Thyroid gland (tissue), 4 donors: ENCODE measurements at regions of chr20 and their contacts with region 1.

Region 1: DNA sequence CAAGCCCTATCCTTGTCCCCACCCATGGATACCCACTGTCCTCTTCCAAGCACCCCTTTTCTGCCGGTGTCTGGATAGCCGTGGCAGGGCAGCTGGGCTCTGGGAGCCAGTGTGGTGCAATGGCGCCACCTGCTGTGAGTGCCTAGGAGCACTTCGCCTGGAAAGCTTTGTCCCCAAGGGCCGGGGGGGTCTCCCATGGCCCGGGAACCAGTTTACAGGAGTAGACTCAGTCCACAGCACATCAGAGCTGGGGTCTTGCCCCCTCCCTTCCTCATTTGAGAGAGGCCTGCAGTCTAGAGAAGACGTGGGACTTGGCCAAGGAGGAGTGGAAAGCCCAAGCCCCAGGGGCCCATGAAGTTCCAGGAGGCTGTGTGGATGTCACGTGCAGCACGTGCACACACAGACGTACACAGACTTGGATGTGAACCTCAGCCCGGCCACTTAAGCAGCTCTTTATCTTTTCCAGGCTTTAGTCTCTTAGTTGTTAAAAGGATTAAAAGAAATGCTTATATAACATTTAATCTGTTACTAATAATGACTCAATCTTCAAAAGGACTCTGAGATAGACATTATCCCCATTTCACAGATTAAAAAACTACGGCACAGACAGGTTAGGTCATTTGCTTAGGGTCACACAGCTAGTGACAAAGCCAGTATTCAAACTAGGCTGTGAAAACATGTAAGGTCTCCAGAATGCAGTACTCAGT is 40.9 kb upstream of the CDH22 start:
- DNase-seq: peak; percentile 64 to 68
- H3K4me3 ChIP-seq: no peak overlapping the region
- H3K27ac ChIP-seq: peak overlapping the region; percentile 39 to 58 (median 41)
- H3K4me1 ChIP-seq: peaks cover 24 to 28% of the 10 kb centered on the region in 2 donors
- H3K27me3 ChIP-seq: no peaks in the 10 kb centered on the region
- CTCF ChIP-seq: peak; percentile 38 to 85 (median 77)
- POLR2A ChIP-seq: no peak

Region 2: DNA sequence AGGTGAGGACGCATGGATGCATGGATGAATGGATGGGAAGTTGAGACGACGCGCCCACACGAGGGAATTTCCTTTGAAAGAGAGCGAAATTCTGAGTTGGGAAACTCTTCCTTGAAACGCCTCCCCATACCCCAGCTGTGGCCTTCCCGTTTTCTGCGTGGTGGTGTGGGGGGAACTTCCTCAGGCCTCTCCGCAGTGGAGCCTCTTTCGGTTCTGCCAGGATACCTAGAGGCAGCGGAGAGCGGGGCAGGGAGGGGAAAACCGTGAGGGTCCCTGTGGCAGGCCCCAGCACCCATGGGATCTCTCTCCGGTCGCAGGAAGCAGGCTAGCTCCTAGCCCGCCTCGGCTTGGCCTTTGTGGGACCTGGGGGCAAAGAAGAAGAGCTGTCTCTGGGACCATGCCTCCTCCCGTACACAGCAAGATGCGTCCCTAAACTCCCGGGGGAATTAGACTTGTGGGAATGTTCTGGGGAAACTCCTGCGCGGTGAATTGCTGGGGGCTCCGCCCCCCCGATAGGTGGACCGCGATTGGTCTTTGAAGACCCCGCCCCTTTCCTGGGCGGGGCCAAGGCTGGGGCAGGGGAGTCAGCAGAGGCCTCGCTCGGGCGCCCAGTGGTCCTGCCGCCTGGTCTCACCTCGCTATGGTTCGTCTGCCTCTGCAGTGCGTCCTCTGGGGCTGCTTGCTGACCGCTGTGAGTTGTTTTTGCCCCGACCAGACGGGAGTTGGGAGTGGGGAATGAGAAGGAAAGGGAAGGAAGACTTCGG is 231.3 kb before region 1 on chr20 and contains the start of gene CD40:
- intact Hi-C with region 1: no loop called
- DNase-seq: peak; percentile 87 to 89
- H3K4me3 ChIP-seq: peak within 1 kb of the TSS in 2 of 3 donors; percentile 16 to 23
- H3K27ac ChIP-seq: peak within 1 kb of the TSS; percentile 59 to 80 (median 75)
- H3K4me1 ChIP-seq: peaks cover 13 to 17% of the 10 kb centered on the region in 2 donors
- H3K27me3 ChIP-seq: no peaks in the 10 kb centered on the region
- CTCF ChIP-seq: no peak
- POLR2A ChIP-seq: peak in 1 of 2 donors; percentile 58
- total RNA-seq, gene CD40: 13.0 to 15.9 (median 15.0) TPM

Region 3: DNA sequence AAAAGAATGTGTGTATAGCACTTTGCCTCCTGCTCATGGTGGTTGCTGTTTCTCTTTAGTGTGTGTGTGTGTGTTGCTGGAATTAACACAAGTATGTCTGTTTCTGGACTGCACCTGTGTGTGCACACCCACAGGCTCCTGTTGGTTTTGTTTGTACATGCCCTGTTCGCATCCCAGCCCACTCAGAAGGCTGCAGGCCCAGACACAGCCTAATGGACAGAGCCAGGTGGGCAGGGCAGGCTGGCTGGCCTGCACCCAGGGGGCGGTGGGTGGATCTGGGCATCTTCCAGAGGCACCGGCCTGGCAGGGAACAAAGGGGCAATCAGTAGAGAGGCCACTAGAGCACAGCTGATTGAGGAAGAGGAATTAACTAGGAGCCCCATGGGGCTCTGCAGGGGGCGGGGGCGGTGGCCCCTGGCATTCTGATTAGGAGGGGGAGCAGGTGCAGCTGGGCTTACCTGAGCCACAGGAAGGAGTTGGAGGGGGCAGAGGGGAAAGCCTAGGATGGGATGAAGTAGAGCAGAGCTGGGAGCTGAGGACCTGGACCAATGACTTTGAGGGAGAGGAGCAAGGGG is 209.2 kb before region 1 on chr20:
- intact Hi-C with region 1: loop called (anchors 5 kb)
- DNase-seq: peak; percentile 87 to 95
- H3K4me3 ChIP-seq: no peak overlapping the region
- H3K27ac ChIP-seq: peak overlapping the region in 1 of 3 donors; percentile 42
- H3K4me1 ChIP-seq: peaks cover 9 to 21% of the 10 kb centered on the region in 2 donors
- H3K27me3 ChIP-seq: no peaks in the 10 kb centered on the region
- CTCF ChIP-seq: peak in 1 of 6 experiments; percentile 0
- POLR2A ChIP-seq: no peak

Region 4: DNA sequence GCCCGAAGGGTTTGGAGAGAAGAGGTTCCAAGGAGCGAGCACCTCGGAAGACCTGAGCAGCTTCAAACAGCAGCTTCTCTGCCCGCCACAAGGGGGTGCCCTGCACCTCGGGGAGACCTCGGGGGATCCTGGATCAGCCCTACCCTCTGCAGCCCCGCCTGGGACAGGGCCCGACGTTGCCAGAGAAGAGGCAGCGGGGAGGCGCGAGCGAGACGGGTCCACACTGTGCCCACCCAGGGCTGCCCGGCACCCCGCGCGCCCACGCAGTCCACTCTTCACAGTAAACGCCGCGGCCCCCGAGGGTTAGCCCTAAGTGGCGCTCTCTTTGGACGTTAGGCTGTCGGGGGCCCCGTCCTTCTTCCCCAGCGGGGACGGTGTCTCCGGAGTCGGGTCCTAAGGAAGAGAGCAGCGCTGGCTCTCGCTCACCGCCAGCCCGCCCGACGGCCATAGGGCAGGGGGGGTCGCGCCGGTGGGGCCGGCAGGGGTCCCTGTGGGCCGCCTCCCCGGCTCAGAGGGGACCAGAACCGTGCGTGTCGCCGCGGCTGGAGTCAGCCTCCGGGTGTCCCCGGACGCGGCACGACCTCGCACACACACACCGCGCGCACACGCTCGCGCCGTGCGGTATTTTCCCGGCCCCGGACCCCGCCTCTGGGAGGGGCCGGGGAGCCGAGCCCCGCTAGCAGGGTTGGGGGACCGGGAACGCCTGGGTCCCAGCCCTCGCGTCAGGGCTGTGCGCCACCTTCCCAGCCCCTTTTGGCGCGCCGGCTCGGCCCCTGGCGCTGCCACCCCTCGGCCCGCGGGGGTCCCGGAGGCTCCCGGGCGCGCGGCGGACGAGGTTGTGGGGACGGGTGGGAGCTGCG is 41.8 kb before region 1 on chr20:
- intact Hi-C with region 1: loop called (anchors 5 kb)
- DNase-seq: peak; percentile 53 to 58
- H3K4me3 ChIP-seq: peak overlapping the region in 1 of 3 donors; percentile 43
- H3K27ac ChIP-seq: no peak overlapping the region
- H3K4me1 ChIP-seq: peaks cover 10 to 27% of the 10 kb centered on the region in 2 donors
- H3K27me3 ChIP-seq: peaks cover 10% of the 10 kb centered on the region
- CTCF ChIP-seq: peak; percentile 60 to 76 (median 64)
- POLR2A ChIP-seq: no peak